Activated T-helper 2 cell treated with anti-CD3 and anti-CD28 coated beads, Interferon-gamma antibody, Interleukin-2, Interleukin-4, amounts not matched to agents 10 μg/mL and 5 μg/mL and 100 μg/mL, durations not matched to agents 14 hours and 24 hours and 36 hours (primary cell): ENCODE measurements at regions of chr6 and their contacts with region 1.

Region 1: GRCh38 chr6:72825315-72825911 is 203.5 kb downstream of the KCNQ5 start:
- DNase-seq: no peak
- H3K4me3 Mint-ChIP-seq: peak overlapping the region; percentile 37
- H3K27ac Mint-ChIP-seq: peak overlapping the region; percentile 84
- H3K4me1 Mint-ChIP-seq: peaks cover 33% of the 10 kb centered on the region
- H3K27me3 Mint-ChIP-seq: no peaks in the 10 kb centered on the region

Region 2: DNA sequence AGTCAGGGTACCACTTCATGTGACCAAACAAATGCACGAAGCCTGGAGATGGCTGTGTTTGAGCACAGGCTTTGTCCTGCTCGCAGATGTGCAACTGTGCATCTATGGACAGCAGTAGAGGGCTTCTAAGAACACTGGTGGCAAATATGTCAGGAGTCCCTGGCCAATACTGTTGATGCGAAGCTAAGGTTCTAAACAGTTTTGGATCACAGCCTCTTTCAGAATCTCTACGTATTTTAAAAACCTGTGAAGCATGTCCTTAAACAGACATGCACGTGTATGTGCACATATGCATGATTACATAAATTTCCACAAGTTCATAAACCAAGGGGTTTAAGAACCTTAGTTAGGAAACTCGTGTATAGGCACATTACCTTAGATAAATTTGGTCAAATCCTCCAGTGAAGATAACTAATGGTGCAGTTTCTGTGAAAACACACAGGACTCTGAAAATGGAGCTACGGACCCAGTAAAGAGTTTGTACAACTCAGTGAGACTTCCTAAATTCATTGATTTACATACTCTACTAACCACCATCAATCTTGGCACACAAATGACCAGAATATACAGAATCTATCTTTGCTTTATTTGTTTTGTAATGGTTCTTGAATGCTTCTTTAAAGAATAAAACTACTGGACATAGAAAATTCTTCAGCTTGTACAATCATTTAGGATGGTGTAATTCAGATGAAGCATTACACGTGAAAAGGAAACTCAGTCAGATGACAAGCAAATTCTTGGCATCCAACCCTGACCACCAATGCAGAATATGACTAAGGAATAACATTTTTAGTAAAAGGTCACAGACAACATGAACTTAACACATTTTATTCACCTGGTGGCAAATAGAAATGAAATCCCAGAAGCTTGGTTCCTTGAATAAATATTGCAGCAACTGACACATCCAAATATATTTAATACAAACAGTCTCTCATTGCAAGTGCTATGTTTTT is 176.1 kb before region 1 on chr6:
- intact Hi-C with region 1: loop called (anchors 1 kb)
- DNase-seq: no peak
- H3K4me3 Mint-ChIP-seq: no peak overlapping the region
- H3K27ac Mint-ChIP-seq: peak overlapping the region; percentile 35
- H3K4me1 Mint-ChIP-seq: peaks cover 41% of the 10 kb centered on the region
- H3K27me3 Mint-ChIP-seq: no peaks in the 10 kb centered on the region

Region 3: DNA sequence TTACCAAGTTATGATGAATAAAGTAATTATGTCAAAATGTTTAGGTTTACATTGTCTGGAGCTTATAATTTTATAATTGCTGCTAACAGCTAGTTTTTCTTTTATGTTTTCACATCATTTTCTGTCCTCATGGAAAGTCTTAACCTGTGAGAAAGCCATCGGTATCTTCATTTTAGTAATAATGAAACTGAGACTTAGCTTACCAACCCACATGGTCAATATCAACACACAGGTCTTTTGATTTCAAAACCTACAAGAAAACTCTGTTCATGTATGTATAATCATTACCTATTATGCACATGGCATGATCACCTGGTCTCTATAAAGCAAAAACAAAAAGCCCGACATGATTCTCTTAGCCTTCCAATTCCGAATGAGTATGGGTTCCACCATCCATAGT is 141.6 kb before region 1 on chr6:
- intact Hi-C with region 1: loop called (anchors 5 kb)
- DNase-seq: no peak
- H3K4me3 Mint-ChIP-seq: no peak overlapping the region
- H3K27ac Mint-ChIP-seq: no peak overlapping the region
- H3K4me1 Mint-ChIP-seq: peaks cover 12% of the 10 kb centered on the region
- H3K27me3 Mint-ChIP-seq: no peaks in the 10 kb centered on the region

Region 4: DNA sequence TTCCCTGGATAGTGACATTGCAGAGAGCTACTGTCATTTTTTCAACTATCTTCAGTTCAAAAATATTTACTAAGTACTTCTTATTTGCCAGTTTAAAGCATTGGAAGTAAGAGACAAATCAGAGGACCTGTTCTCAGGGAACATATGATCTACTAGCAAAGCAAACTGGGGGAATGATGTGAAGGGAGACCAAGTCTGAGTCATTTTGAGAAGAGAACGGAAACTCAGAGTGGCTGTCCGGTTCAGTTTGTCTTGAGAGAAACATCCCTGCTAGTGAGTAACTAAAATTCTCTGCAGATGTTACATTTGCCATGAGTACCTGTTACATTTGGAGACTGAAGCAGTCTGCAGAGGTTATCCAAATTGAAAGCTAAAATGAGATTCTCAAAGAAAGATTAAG is 85.3 kb before region 1 on chr6:
- intact Hi-C with region 1: loop called (anchors 1 kb)
- DNase-seq: no peak
- H3K4me3 Mint-ChIP-seq: no peak overlapping the region
- H3K27ac Mint-ChIP-seq: peak overlapping the region; percentile 47
- H3K4me1 Mint-ChIP-seq: peaks cover 37% of the 10 kb centered on the region
- H3K27me3 Mint-ChIP-seq: no peaks in the 10 kb centered on the region